Endothelial cell of umbilical vein (primary cell): ENCODE measurements at regions of chr1 and their contacts with region 1.

Region 1: GRCh38 chr1:225772323-225772768 is 5.3 kb upstream of the SRP9 start:
- DNase-seq: peak; percentile 87
- H3K4me3 ChIP-seq: no peak overlapping the region
- H3K27ac ChIP-seq: no peak overlapping the region
- H3K4me1 ChIP-seq: peaks cover 19% of the 10 kb centered on the region
- H3K27me3 ChIP-seq: no peaks in the 10 kb centered on the region
- CTCF ChIP-seq: peak; percentile 88 to 90
- POLR2A ChIP-seq: no peak

Region 2: DNA sequence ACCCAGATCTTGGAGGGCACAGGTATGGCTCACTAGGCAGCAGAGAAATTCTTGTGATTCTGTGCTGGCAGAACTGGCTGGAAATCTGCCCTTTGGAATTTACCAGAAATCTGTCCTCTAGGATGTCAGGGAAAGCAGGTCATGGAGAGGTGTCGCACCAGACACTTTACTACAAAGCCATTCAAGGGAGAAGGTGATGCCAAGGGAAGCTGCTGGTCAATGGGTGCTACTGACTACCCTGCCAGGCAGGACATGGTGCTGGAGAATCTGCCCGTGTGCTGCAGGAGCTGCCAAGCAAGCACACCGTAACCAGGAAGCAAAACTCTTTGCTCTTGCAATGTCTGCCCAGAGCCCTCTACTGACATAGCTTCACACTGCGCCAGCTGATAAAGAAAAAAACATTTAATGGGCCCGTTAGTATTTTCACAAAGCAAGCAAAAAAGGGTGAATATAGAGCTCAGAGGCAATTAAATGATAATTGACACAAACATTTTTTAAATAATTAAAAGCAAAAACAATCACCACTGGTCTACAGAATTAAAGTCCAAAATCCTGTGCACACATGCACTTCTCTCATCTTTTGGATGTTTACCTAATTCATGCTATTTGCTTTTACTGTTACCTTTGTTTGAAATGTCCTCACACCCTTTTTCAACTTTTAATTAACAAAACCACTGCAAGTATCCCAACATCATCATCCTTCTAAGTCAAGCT is 1665.6 kb before region 1 on chr1:
- CTCF ChIA-PET with region 1: no interaction called
- POLR2A ChIA-PET with region 1: no interaction called
- dilution Hi-C with region 1: no loop called
- intact Hi-C with region 1: no loop called
- DNase-seq: peak; percentile 67
- H3K4me3 ChIP-seq: no peak overlapping the region
- H3K27ac ChIP-seq: no peak overlapping the region
- H3K4me1 ChIP-seq: peaks cover 9% of the 10 kb centered on the region
- H3K27me3 ChIP-seq: no peaks in the 10 kb centered on the region
- CTCF ChIP-seq: peak; percentile 49 to 58
- POLR2A ChIP-seq: no peak

Region 3: DNA sequence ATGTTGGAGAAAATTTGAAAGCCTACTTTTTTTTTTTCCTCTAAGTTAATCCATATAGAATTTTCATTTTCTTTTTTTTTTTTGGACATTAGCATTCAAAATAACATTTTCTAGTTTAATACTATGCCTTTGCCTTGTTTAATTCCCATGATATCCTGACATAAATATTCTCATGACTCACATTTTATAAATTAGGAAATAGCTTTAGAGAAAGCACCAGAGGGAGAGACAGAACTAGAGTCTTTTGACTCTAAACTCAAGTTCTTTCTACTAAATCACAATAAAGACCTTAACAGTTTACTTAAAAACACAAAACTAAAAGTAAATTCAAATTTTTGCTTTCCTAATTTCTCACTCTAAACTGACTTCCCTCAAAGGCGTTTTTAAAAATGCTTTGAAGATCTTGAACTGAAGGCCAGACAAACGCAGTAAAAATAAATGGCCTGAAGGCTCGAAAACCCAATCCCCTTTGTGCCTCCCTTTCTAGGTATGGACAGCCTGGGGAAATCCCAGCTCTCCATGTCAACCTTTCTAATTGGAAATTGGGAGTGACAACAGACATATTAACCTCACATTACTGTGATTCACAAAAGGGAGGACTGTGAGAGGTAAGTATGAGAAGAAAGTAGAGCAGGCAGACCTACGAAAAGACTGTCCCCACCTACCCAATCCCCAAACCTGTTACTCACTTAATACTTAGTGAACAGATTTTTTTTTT is 224.0 kb before region 1 on chr1:
- CTCF ChIA-PET with region 1: interaction called, 38 read pairs
- POLR2A ChIA-PET with region 1: interaction called, 3 read pairs
- dilution Hi-C with region 1: no loop called
- intact Hi-C with region 1: no loop called
- DNase-seq: no peak
- H3K4me3 ChIP-seq: no peak overlapping the region
- H3K27ac ChIP-seq: no peak overlapping the region
- H3K4me1 ChIP-seq: no peaks in the 10 kb centered on the region
- H3K27me3 ChIP-seq: no peaks in the 10 kb centered on the region
- CTCF ChIP-seq: no peak
- POLR2A ChIP-seq: no peak

Region 4: DNA sequence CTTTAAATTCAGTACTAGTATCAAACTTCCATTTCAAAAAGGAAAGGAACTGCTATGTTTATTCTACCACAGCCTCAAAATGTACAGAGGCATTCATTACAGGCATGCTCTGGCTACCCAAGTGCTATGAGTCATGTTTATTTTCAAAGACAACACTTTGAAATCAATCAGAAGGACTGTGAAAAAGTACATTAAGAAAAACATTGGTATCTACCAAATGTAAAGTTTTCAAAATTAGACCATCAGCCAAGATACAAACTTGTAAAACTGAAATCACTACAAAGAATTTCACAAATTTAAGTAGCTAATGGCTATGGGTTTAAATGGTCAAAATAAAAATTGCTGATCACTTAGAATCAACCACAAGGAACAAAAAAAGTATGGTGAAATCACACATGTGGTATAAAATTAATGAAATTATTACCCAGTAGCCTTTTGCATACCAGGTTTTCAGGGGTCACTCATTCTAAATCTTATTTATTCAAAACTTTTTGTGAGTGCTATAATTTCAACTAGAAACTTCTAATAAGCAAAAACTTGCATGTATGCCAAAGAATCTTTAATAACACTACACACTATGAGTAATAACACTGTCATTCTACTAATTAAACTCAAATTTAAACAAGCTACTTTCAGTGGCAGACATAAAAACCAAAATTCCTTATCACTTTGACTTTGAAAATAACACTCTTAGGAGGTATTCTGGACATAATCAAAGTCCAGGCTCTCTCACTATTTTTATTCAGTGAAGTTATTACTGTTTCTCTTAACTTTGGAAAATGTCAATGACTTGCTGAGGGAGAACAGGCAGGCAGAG is 168.6 kb before region 1 on chr1:
- CTCF ChIA-PET with region 1: interaction called, 17 read pairs
- POLR2A ChIA-PET with region 1: interaction called, 3 read pairs
- dilution Hi-C with region 1: no loop called
- intact Hi-C with region 1: loop called (anchors 1 kb)
- DNase-seq: peak; percentile 87
- H3K4me3 ChIP-seq: no peak overlapping the region
- H3K27ac ChIP-seq: peak overlapping the region; percentile 39
- H3K4me1 ChIP-seq: peaks cover 27% of the 10 kb centered on the region
- H3K27me3 ChIP-seq: no peaks in the 10 kb centered on the region
- CTCF ChIP-seq: no peak
- POLR2A ChIP-seq: no peak

Region 5: GRCh38 chr1:225700164-225700740 is 72.1 kb before region 1 on chr1:
- CTCF ChIA-PET with region 1: interaction called, 11 read pairs
- POLR2A ChIA-PET with region 1: no interaction called
- dilution Hi-C with region 1: no loop called
- intact Hi-C with region 1: no loop called
- DNase-seq: peak; percentile 67
- H3K4me3 ChIP-seq: no peak overlapping the region
- H3K27ac ChIP-seq: peak overlapping the region; percentile 58
- H3K4me1 ChIP-seq: peaks cover 20% of the 10 kb centered on the region
- H3K27me3 ChIP-seq: no peaks in the 10 kb centered on the region
- CTCF ChIP-seq: no peak
- POLR2A ChIP-seq: no peak

Region 6: DNA sequence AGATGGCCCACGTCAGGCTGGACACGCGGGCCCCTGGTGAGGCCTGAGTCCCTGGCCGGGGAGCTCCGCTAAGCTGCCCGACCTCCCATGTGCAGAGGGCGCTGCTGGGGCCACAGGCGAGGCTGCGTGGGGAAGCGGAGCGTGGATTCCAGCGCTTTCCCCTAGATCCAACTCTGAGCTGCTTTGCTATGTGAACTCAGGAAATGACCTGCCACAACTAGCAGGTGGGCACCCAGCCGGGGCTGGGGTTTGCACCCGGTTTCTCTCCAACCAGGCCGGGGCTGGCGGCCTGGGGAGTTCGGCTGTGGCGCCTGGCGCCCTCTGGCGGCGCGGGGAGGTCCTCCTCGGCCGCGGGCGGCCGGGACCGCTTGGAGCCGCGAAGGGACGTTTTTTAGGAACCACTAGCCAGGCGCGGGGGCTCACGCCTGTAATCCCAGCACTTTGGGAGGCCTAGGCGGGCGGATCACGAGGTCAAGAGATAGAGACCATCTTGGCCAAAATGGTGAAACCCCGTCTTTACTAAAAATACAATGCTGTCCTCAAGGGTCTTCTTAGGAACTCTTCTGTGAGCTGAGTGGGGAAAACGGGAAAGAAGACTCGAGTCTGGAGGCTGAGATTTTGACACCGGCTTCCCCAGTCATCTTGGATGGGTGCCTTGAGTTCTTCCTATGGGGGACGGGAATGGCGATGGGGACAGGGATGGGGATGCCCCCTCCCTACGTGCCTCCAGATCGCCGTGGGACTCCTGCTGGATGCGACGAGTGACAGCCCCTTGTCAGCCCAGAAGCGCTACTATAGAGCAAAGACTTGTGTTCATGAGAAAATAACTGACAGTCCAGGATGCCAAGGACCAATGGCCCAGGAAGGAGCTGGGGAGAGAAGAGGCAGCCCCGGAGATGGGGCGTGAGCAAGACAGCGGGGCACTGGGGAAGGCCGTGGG is 139.1 kb after region 1 on chr1:
- CTCF ChIA-PET with region 1: interaction called, 26 read pairs
- POLR2A ChIA-PET with region 1: no interaction called
- dilution Hi-C with region 1: no loop called
- intact Hi-C with region 1: loop called (anchors 1 kb)
- DNase-seq: peak; percentile 47
- H3K4me3 ChIP-seq: no peak overlapping the region
- H3K27ac ChIP-seq: no peak overlapping the region
- H3K4me1 ChIP-seq: no peaks in the 10 kb centered on the region
- H3K27me3 ChIP-seq: no peaks in the 10 kb centered on the region
- CTCF ChIP-seq: peak; percentile 88 to 90
- POLR2A ChIP-seq: no peak

Region 7: GRCh38 chr1:226649780-226650179 is 877.4 kb after region 1 on chr1:
- CTCF ChIA-PET with region 1: no interaction called
- POLR2A ChIA-PET with region 1: no interaction called
- dilution Hi-C with region 1: no loop called
- intact Hi-C with region 1: no loop called
- DNase-seq: peak; percentile 68
- H3K4me3 ChIP-seq: no peak overlapping the region
- H3K27ac ChIP-seq: no peak overlapping the region
- H3K4me1 ChIP-seq: peaks cover 12% of the 10 kb centered on the region
- H3K27me3 ChIP-seq: no peaks in the 10 kb centered on the region
- CTCF ChIP-seq: peak in 1 of 2 donors; percentile 38
- POLR2A ChIP-seq: no peak

Region 8: GRCh38 chr1:227006226-227006796 is 1234.0 kb after region 1 on chr1:
- CTCF ChIA-PET with region 1: no interaction called
- POLR2A ChIA-PET with region 1: no interaction called
- dilution Hi-C with region 1: no loop called
- intact Hi-C with region 1: no loop called
- DNase-seq: no peak
- H3K4me3 ChIP-seq: no peak overlapping the region
- H3K27ac ChIP-seq: no peak overlapping the region
- H3K4me1 ChIP-seq: no peaks in the 10 kb centered on the region
- H3K27me3 ChIP-seq: no peaks in the 10 kb centered on the region
- CTCF ChIP-seq: no peak
- POLR2A ChIP-seq: no peak